ENCODE measurements at regions of chr16 and their contacts with region 1.

Region 1: DNA sequence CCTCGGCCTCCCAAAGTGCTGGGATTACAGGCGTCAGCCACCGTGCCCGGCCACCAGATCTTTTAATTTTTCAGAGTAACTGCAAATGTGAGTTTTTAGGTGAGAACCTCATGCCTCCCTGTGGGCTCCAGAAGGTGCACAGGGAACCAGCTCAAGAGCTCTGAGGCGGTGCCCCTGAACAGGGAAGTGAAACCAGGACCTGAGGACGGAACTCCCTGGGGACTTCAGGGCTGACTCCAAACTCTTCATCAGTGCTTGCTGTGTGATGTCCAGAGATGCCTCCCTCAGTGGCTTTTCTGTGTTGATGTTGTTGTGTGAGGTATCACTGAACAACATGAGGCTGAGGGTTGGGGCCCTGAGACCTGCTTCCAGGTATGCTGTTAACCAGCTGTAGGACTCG is 23.8 kb downstream of the SLC12A3 start:
- DNase-seq: no peak
- H3K4me3 ChIP-seq: no peak overlapping the region
- H3K4me3 Mint-ChIP-seq: no peak overlapping the region
- H3K27ac Mint-ChIP-seq: no peak overlapping the region
- H3K4me1 ChIP-seq: peaks cover 5% of the 10 kb centered on the region; the same call in 1 of the 2 replicates
- H3K4me1 Mint-ChIP-seq: no peaks in the 10 kb centered on the region
- H3K27me3 ChIP-seq: no peaks in the 10 kb centered on the region
- H3K27me3 Mint-ChIP-seq: no peaks in the 10 kb centered on the region
- CTCF ChIP-seq: no peak

Region 2: GRCh38 chr16:56919099-56919800 is 30.4 kb after region 1 on chr16:
- CTCF ChIA-PET with region 1: no interaction called
- POLR2A ChIA-PET with region 1: no interaction called
- intact Hi-C with region 1: loop called (anchors 2 kb)
- DNase-seq: peak; percentile 89 to 92
- H3K4me3 ChIP-seq: no peak overlapping the region
- H3K4me3 Mint-ChIP-seq: peak overlapping the region; percentile 63
- H3K27ac Mint-ChIP-seq: peak overlapping the region; percentile 95
- H3K4me1 ChIP-seq: peaks cover 68% of the 10 kb centered on the region
- H3K4me1 Mint-ChIP-seq: peaks cover 50% of the 10 kb centered on the region
- H3K27me3 ChIP-seq: no peaks in the 10 kb centered on the region
- H3K27me3 Mint-ChIP-seq: no peaks in the 10 kb centered on the region
- CTCF ChIP-seq: no peak

Measured in Caco-2 (cell line).